Activated CD4-positive, alpha-beta memory T cell treated with anti-CD3 and anti-CD28 coated beads for 36 hours (primary cell): ENCODE measurements at regions of chr19 and their contacts with region 1.

Region 1: GRCh38 chr19:12333162-12334159 is at the start of gene ZNF563:
- DNase-seq: peak; percentile 100
- H3K4me3 Mint-ChIP-seq: peak within 1 kb of the TSS; percentile 98
- H3K27ac Mint-ChIP-seq: peak within 1 kb of the TSS; percentile 97
- H3K4me1 Mint-ChIP-seq: peaks cover 35% of the 10 kb centered on the region
- H3K27me3 Mint-ChIP-seq: no peaks in the 10 kb centered on the region
- total RNA-seq, gene ZNF563: 6.1 to 6.3 TPM

Region 2: GRCh38 chr19:12162882-12163806 is 170.3 kb before region 1 on chr19 and contains the start of gene ZNF136:
- CTCF ChIA-PET with region 1: no interaction called
- POLR2A ChIA-PET with region 1: interaction called, 11 read pairs
- intact Hi-C with region 1: loop called (anchors 2 kb)
- DNase-seq: peak; percentile 97
- H3K4me3 Mint-ChIP-seq: peak within 1 kb of the TSS; percentile 92
- H3K27ac Mint-ChIP-seq: peak within 1 kb of the TSS; percentile 94
- H3K4me1 Mint-ChIP-seq: peaks cover 40% of the 10 kb centered on the region
- H3K27me3 Mint-ChIP-seq: no peaks in the 10 kb centered on the region
- total RNA-seq, gene ZNF136: 9.5 to 12.8 TPM

Region 3: DNA sequence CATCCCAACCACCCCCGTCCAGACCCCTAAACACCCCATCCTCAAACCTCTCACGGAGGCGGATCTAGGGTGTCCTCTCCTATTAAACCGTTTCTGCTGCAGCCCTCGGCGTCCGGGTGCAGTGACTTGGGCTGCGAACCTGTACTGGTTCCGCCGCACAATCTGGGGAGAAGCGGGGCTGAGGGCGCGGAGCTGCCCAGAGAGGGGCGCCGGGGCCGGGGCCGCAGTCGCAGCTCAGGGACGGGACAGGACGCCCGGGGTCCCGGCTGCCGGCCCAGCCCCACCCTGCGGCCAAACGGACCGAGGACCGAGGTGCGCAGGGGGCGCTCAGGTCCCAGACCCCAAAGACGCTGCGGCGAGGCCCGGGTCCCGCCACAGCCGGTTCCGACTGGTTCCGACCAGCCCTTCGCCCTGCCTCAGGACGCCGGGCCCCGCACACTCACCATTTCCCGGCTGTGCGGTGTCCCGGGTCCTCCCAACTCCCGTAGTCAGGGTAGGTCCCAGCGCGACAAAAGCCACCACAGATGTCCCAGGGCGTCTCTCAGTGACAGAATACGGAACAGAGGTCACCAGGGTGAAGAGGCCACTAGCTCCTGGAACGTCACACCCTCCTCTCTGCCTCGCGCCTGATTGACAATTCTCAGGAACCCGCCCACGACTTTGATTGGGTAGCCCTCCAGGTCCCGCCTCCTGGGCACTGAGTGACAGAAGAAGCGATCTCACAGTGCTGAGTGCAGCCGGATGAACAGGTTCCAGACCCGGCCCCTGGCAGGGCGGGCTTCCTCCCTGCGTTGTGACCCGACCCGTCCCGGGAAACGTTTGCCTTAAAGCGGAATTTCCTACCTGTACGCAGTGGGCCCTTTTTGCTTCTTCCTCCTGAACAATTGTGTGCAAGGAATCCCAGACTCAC is 39.0 kb before region 1 on chr19 and contains the start of gene ZNF44:
- CTCF ChIA-PET with region 1: interaction called, 3 read pairs
- POLR2A ChIA-PET with region 1: interaction called, 12 read pairs
- intact Hi-C with region 1: loop called (anchors 1 kb)
- DNase-seq: peak; percentile 99
- H3K4me3 Mint-ChIP-seq: peak within 1 kb of the TSS; percentile 98
- H3K27ac Mint-ChIP-seq: peak within 1 kb of the TSS; percentile 98
- H3K4me1 Mint-ChIP-seq: peaks cover 27% of the 10 kb centered on the region
- H3K27me3 Mint-ChIP-seq: no peaks in the 10 kb centered on the region
- total RNA-seq, gene ZNF44: 7.5 to 8.9 TPM

Region 4: GRCh38 chr19:12400633-12401502 is 67.4 kb after region 1 on chr19 and contains the start of gene ZNF799:
- CTCF ChIA-PET with region 1: no interaction called
- POLR2A ChIA-PET with region 1: interaction called, 11 read pairs
- intact Hi-C with region 1: loop called (anchors 2 kb)
- DNase-seq: peak; percentile 93
- H3K4me3 Mint-ChIP-seq: peak within 1 kb of the TSS; percentile 90
- H3K27ac Mint-ChIP-seq: peak within 1 kb of the TSS; percentile 76
- H3K4me1 Mint-ChIP-seq: peaks cover 8% of the 10 kb centered on the region
- H3K27me3 Mint-ChIP-seq: no peaks in the 10 kb centered on the region
- total RNA-seq, gene ZNF799: 4.2 to 4.7 TPM

Region 5: GRCh38 chr19:12777217-12778016 is 444.0 kb after region 1 on chr19:
- CTCF ChIA-PET with region 1: no interaction called
- POLR2A ChIA-PET with region 1: no interaction called
- intact Hi-C with region 1: loop called (anchors 5 kb)
- DNase-seq: peak; percentile 87
- H3K4me3 Mint-ChIP-seq: peak overlapping the region; percentile 76
- H3K27ac Mint-ChIP-seq: peak overlapping the region; percentile 87
- H3K4me1 Mint-ChIP-seq: peaks cover 40% of the 10 kb centered on the region
- H3K27me3 Mint-ChIP-seq: no peaks in the 10 kb centered on the region